Ovary (tissue), 10 donors: ENCODE measurements at regions of chr15 and their contacts with region 1.

Region 1: GRCh38 chr15:65032801-65033537 is 3.5 kb upstream of the MTFMT start:
- DNase-seq: peak in 2 of 5 donors; percentile 43 to 57
- H3K4me3 ChIP-seq: no peak overlapping the region
- H3K27ac ChIP-seq: no peak overlapping the region
- H3K4me1 ChIP-seq: peaks cover 5% of the 10 kb centered on the region
- H3K27me3 ChIP-seq: no peaks in the 10 kb centered on the region
- CTCF ChIP-seq: peak in 1 of 3 donors; percentile 18
- EP300 ChIP-seq: no peak
- POLR2A ChIP-seq: no peak

Region 2: GRCh38 chr15:65086017-65086679 is 53.2 kb after region 1 on chr15:
- intact Hi-C with region 1: loop called in 2 of 4 experiments (anchors 10 kb)
- DNase-seq: no peak
- H3K4me3 ChIP-seq: no peak overlapping the region
- H3K27ac ChIP-seq: no peak overlapping the region
- H3K4me1 ChIP-seq: peaks cover 14% of the 10 kb centered on the region
- H3K27me3 ChIP-seq: no peaks in the 10 kb centered on the region
- CTCF ChIP-seq: no peak
- EP300 ChIP-seq: no peak
- POLR2A ChIP-seq: no peak

Region 3: GRCh38 chr15:65101411-65101890 is 68.5 kb after region 1 on chr15:
- intact Hi-C with region 1: loop called in 1 of 4 experiments (anchors 5 kb)
- DNase-seq: peak; percentile 41 to 72 (median 69)
- H3K4me3 ChIP-seq: no peak overlapping the region
- H3K27ac ChIP-seq: no peak overlapping the region
- H3K4me1 ChIP-seq: no peaks in the 10 kb centered on the region
- H3K27me3 ChIP-seq: no peaks in the 10 kb centered on the region
- CTCF ChIP-seq: peak; percentile 32 to 53 (median 33)
- EP300 ChIP-seq: no peak
- POLR2A ChIP-seq: no peak